ENCODE measurements at regions of chr2 and their contacts with region 1.

Region 1: DNA sequence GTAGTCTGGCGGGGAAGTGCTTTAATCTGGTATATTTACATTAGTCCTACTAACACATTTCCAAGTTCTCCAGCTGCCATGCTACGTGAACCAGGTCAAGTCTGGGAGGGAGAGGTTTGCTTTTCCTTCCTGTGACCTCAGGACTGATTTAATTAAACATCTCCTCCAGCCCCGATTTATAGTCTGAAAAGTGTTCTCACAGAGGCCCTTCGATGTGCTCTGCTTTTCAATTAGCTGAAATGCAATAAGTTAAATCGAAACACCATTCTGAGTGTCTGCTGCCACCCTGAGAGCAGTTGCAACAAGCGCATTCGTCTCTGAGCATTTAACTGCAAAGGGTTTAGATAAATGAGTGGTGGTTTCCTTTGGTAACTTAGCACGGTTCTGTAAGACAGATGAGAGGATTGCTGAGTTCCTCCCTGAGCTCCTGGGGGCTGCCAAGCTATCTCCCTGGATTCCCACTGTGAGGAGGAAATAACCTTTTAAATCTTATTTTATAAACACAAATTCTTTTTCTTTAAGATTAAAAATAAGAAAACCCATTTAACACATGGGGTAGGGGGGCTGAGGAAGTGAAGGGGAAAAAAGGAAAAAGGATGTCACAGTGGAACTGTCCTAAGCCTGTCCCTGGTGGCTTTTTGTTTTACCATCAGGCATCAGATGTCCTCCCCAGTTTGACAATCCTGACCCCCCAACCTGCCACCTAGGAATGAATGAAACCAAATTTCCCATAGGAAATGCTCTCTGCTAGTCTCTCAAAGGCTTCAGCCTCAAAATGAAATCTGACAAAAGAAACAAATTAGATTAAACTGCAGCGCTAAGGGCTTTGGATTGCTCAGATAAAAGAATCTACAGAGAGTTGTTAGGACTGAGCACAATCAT is 56.5 kb upstream of the CREB1 start:
- DNase-seq: peak in 1 of 2 donors; percentile 18
- ATAC-seq: peak; percentile 42

Region 2: DNA sequence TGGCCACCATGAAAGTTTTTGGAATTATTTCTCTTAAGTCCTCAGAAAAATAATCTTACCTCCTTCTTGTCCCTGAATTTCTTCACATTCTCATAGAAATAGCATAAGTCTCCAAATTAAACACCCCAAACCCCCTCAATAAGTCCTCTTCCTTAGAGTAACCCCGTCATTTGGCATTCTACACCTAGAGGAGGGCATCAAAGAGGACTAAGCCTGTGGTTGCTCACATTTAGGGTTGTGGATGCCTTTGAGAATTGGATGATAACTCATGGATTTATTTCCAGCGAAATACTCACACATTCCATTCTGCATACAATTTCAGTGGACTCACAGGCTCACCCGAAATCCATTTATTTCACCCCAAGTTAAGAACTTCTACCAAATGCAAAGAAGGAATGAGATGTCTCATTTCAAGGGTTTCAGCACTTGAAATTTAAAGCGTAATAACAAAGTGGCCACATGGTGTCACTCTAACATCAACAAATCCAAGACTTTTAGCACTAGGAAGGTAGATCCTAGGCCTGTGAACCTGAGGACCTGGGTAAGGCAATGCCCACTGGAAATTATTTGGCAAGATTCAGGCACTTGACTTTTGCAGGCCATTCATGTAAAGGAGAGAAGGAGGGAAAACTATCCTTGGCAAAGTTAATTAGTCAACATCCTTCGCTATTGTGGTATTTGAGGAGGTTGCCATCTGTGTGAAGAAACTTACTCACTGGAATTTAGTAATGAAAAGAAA is 779.7 kb before region 1 on chr2:
- intact Hi-C with region 1: loop called in 1 of 2 experiments (anchors 5 kb)
- DNase-seq: peak in 1 of 2 donors; percentile 8
- ATAC-seq: peak; percentile 78

Region 3: GRCh38 chr2:206800506-206801417 is 672.5 kb before region 1 on chr2:
- intact Hi-C with region 1: loop called in 1 of 2 experiments (anchors 5 kb)
- DNase-seq: peak; percentile 50 to 60
- ATAC-seq: peak; percentile 91

Region 4: DNA sequence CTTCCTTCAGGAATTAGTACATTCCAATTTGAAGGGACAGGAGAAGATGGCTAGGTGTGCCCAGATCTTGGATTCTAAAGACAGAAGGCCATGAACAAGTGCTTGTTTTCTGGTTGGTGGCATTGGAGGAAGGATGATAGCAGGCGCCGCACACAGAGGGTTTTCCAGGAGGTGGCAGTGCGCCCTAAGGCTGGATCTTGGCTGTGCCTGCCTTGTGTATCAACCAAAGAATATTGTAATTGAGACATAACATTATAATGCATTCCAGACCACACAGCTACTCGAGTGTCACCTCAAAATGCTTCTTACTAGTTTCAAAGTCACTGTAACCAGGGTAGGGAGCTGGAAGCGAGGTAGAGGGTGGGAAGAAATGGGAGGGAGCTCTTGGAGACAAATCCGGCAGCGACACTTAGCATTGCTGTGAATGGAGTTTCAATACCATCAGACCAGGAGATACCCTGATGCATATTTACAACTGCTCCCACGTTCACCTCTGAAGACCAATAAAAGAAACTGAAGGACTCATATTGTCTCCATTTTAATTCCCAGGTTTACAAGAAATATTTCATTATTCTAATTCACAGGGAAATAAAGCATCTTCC is 491.4 kb before region 1 on chr2:
- intact Hi-C with region 1: loop called (anchors 2 to 5 kb)
- DNase-seq: peak; percentile 34 to 49
- ATAC-seq: peak; percentile 52

Region 5: GRCh38 chr2:207166039-207166348 is 307.3 kb before region 1 on chr2:
- intact Hi-C with region 1: loop called in 1 of 2 experiments (anchors 10 kb)
- DNase-seq: peak; percentile 94 to 97
- ATAC-seq: peak; percentile 94

Region 6: GRCh38 chr2:208738536-208738935 is 1265.2 kb after region 1 on chr2:
- intact Hi-C with region 1: no loop called
- DNase-seq: no peak
- ATAC-seq: no peak